OCI-LY7 (cell line): ENCODE measurements at regions of chr12 and their contacts with region 1.

Region 1: GRCh38 chr12:9615420-9616136 is 7.9 kb upstream of the KLRB1 start:
- DNase-seq: peak; percentile 67
- H3K4me3 ChIP-seq: peak overlapping the region; percentile 58
- H3K27ac ChIP-seq: peak overlapping the region; percentile 96
- H3K4me1 ChIP-seq: peaks cover 61% of the 10 kb centered on the region
- CTCF ChIP-seq: no peak

Region 2: GRCh38 chr12:9464408-9464807 is 151.2 kb before region 1 on chr12:
- CTCF ChIA-PET with region 1: no interaction called
- POLR2A ChIA-PET with region 1: interaction called, 4 read pairs
- intact Hi-C with region 1: loop called (anchors 5 kb)
- DNase-seq: no peak
- H3K4me3 ChIP-seq: no peak overlapping the region
- H3K27ac ChIP-seq: no peak overlapping the region
- H3K4me1 ChIP-seq: peaks cover 23% of the 10 kb centered on the region
- CTCF ChIP-seq: no peak

Region 3: DNA sequence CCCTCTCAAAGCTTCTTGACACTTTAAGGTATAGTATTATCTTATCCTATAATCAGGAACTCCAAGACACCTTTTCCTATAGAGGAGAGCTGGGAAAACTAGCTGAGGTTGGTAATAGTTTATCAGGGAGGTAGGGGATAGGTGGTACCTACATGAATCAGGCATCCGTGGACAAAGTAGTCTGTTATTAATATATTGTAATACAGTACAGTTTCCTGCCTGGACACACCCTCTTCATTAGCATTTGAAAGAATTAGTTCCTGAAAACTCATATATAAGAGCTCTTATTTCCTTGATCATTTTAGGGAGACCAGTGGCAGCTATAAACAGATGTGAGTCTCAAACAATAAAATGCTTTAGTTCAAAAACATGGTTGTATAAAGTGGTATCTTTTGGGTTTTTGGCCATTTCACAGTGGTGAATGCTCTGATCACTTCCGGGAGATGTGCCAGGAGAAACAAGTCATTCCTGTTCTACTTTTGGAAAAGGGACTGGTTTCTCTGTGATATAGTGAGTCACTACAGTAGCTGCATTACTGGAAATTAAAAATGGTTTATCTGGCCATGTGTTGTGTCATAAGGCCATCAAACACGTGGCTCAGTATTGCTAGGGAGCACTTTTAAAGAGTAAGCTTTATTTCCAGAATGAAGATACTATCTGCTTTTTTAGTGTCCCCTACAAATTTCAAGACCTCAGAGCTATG is 106.0 kb before region 1 on chr12:
- CTCF ChIA-PET with region 1: no interaction called
- POLR2A ChIA-PET with region 1: interaction called, 3 read pairs
- intact Hi-C with region 1: loop called (anchors 2 kb)
- DNase-seq: peak; percentile 0
- H3K4me3 ChIP-seq: peak overlapping the region; percentile 34
- H3K27ac ChIP-seq: peak overlapping the region; percentile 91
- H3K4me1 ChIP-seq: peaks cover 34% of the 10 kb centered on the region
- CTCF ChIP-seq: no peak

Region 4: GRCh38 chr12:9750276-9751203 is 135.0 kb after region 1 on chr12:
- CTCF ChIA-PET with region 1: no interaction called
- POLR2A ChIA-PET with region 1: no interaction called
- intact Hi-C with region 1: no loop called
- DNase-seq: peak; percentile 86
- H3K4me3 ChIP-seq: peak overlapping the region; percentile 26
- H3K27ac ChIP-seq: no peak overlapping the region
- H3K4me1 ChIP-seq: peaks cover 39% of the 10 kb centered on the region
- CTCF ChIP-seq: peak; percentile 80

Region 5: DNA sequence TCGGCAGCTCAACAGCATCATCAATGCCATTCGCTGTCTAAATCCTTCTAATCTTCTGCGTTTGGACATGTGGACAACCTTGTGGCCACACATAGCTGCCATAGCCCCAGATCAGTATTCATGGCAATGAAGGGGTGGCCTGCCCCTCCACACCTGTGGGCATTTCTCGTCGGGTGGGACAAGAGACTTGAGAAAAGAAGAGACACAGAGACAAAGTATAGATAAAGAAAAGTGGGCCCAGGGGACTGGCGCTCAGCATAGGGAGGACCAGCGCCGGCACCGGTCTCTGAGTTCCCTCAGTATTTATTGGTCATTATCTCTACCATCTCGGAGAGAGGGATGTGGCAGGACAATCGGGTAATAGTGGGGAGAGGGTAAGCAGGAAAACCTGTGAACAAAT is 955.6 kb after region 1 on chr12:
- CTCF ChIA-PET with region 1: no interaction called
- POLR2A ChIA-PET with region 1: no interaction called
- intact Hi-C with region 1: no loop called
- DNase-seq: no peak
- H3K4me3 ChIP-seq: no peak overlapping the region
- H3K27ac ChIP-seq: no peak overlapping the region
- H3K4me1 ChIP-seq: peaks cover 4% of the 10 kb centered on the region
- CTCF ChIP-seq: no peak